ENCODE measurements at regions of chr22 and their contacts with region 1.

Region 1: GRCh38 chr22:38569972-38570778 is at the start of gene DMC1:
- DNase-seq: peak; percentile 94 to 96 (median 95)
- ATAC-seq: peak; percentile 90 to 98 (median 98)
- H3K4me3 ChIP-seq: peak within 1 kb of the TSS; percentile 45 to 82 (median 68)
- H3K27ac ChIP-seq: peak within 1 kb of the TSS in 11 of 12 donors; percentile 62 to 94 (median 87)
- H3K4me1 ChIP-seq: peaks cover 0 to 38% (median 15%) of the 10 kb centered on the region in 12 donors
- H3K27me3 ChIP-seq: peaks cover 0 to 5% (median 0%) of the 10 kb centered on the region in 9 donors
- CTCF ChIP-seq: no peak
- POLR2A ChIP-seq: peak in 1 of 2 donors; percentile 46
- total RNA-seq, gene DMC1: 0.16 to 2.4 (median 1.1) TPM

Region 2: GRCh38 chr22:38056969-38057891 is 512.9 kb before region 1 on chr22 and contains the start of gene PICK1:
- intact Hi-C with region 1: loop called (anchors 2 to 10 kb)
- DNase-seq: peak; percentile 88 to 93 (median 90)
- ATAC-seq: peak; percentile 86 to 95 (median 94)
- H3K4me3 ChIP-seq: peak within 1 kb of the TSS; percentile 38 to 88 (median 66)
- H3K27ac ChIP-seq: peak within 1 kb of the TSS; percentile 1 to 88 (median 82)
- H3K4me1 ChIP-seq: peaks cover 0 to 22% (median 11%) of the 10 kb centered on the region in 12 donors
- H3K27me3 ChIP-seq: no peaks in the 10 kb centered on the region
- CTCF ChIP-seq: peak in 4 of 12 donors; percentile 6 to 23 (median 16)
- POLR2A ChIP-seq: no peak
- total RNA-seq, gene PICK1: 18.8 to 39.5 (median 22.2) TPM

Region 3: DNA sequence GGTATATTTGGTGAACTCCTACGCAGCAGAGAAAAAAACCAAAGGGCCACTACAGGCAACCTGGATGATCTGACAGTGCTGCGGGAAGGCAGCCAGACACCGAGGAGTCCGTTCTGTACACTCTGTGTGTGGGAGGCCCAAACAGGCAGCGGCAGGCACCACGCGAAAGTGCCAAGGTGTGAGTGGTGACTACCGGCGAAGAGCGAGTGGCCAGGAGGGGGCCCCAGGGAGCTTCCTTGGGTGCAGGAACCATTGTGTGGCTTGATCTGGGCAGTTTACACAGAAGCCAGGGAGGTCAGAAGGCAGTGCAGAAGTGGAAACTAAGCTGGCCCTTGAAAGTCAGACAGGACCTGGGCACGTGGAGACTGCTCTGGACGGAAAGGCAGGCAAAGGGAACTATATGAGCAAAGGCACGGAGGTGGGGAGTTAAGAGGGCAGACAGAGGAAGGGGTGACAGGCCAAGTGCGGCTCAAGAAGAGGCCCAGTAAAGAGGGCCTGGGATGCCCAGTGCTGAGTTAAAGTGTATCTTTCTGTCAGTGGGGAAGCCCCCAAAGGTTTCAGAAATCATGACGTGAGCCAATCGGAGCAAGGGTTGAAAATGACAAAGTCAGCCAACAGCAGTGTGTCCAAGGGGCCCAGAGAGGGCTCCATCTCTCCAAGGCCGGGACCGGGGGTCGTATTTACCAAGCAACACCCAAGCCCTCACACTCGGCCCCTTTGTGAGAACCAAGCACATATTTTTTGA is 308.0 kb before region 1 on chr22:
- intact Hi-C with region 1: loop called in 1 of 10 experiments (anchors 5 kb)
- DNase-seq: peak; percentile 48 to 75 (median 61)
- ATAC-seq: peak; percentile 22 to 67 (median 56)
- H3K4me3 ChIP-seq: no peak overlapping the region
- H3K27ac ChIP-seq: peak overlapping the region in 11 of 12 donors; percentile 18 to 91 (median 78)
- H3K4me1 ChIP-seq: peaks cover 24 to 95% (median 77%) of the 10 kb centered on the region in 12 donors
- H3K27me3 ChIP-seq: no peaks in the 10 kb centered on the region
- CTCF ChIP-seq: peak; percentile 50 to 77 (median 58)
- POLR2A ChIP-seq: no peak

Region 4: DNA sequence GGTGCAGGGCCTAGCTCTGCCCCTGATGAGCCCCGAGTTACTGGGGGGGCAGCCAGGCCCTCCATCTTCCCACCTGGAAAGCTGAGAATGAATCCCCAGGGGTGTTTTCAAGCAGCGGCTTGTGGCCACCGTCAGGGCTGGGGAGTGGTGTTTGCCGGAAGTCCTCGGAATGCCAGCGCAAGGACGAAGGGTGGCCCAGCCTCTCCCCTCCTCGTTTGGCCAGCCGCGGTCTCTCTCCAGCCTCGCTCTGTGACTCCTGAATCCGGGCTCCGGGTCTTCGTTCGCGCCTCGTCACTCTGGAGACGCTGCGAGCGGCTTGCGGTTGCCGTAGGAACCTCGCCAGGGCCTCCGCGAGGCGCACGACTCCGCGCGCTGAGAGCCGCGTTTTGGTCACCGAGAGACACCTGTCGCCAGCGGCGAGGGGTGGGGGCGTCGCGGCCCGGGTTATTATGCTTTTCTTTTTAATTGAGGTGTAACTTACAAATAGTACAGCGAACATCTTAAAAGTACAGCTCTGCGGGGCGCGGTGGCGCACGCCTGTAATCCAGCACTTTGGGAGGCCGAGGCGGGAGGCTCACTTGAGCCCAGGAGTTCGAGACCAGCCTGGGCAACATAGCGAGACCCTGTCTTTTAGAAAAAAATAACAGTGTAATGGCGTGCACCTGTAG is 108.6 kb before region 1 on chr22:
- intact Hi-C with region 1: loop called in 1 of 10 experiments (anchors 10 kb)
- DNase-seq: peak; percentile 86 to 91 (median 88)
- ATAC-seq: peak; percentile 54 to 81 (median 76)
- H3K4me3 ChIP-seq: peak overlapping the region in 10 of 12 donors; percentile 9 to 43 (median 30)
- H3K27ac ChIP-seq: peak overlapping the region in 9 of 12 donors; percentile 11 to 82 (median 71)
- H3K4me1 ChIP-seq: peaks cover 0 to 50% (median 20%) of the 10 kb centered on the region in 12 donors
- H3K27me3 ChIP-seq: peaks cover 0 to 70% (median 5%) of the 10 kb centered on the region in 9 donors
- CTCF ChIP-seq: peak in 2 of 12 donors; percentile 3 to 5
- POLR2A ChIP-seq: no peak

Region 5: DNA sequence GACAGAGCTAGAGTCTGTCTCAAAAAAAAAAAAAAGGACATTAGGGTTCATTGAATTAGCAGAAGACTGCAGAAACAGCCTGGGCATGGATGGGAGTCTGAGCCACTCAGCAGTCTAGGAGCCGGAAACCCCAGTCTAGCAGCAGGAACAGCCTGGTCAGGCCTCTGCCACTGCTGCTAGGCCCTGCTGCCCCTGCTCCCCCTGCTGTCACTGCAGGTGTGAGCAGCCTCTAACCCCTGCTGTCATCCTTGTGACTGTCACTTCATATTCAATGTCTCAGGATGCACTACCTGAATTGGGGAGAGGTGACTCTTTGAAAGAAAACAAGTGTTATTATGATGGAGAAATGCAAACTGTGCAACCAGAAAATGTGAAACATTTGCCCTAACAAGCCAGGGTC is 57.1 kb before region 1 on chr22:
- intact Hi-C with region 1: loop called in 5 of 10 experiments (anchors 5 kb)
- DNase-seq: peak in 1 of 5 donors; percentile 34
- ATAC-seq: peak in 3 of 4 donors; percentile 54 to 74 (median 55)
- H3K4me3 ChIP-seq: no peak overlapping the region
- H3K27ac ChIP-seq: no peak overlapping the region
- H3K4me1 ChIP-seq: no peaks in the 10 kb centered on the region
- H3K27me3 ChIP-seq: no peaks in the 10 kb centered on the region
- CTCF ChIP-seq: peak in 2 of 12 donors; percentile 19 to 30
- POLR2A ChIP-seq: no peak

Measured in heart left ventricle (tissue), 16 donors.